Left ventricle myocardium superior (tissue), 1 donor: ENCODE measurements at regions of chr6 and their contacts with region 1.

Region 1: GRCh38 chr6:152916035-152916434 is 66.8 kb downstream of the FBXO5 start:
- DNase-seq: no peak
- ATAC-seq: no peak

Region 2: DNA sequence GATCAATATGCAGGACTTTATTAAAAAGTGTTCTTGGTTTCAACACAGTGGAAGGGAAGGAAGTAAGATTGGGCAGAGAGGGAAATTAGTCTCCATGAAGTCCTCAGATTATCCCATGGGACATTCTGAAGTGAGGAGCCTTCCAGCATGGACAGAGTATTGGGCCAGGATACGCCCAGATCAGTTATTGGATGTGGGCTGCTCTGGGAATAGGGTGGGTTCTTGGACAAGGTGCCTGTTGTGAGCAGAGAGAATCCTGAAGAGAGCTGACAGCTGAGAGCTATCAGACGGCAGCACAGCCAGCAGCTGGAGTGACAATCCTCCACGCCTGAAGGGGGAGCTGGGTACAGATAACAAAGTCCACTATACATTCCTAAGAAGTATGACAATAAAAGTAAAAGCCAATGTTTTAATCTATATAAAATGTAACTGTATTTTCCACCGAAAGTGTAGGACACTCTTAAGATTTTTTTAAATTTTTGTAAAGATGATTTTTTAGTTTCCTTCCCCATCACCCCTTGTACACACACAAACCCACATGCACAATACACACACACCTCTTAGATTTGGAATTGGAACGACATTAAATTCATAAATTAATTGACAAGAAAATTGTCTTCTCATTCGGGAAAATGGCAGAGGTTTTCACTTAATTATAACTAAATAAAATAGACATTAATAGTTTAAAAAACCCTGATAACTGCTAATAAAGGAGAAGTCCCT is 41.0 kb before region 1 on chr6:
- intact Hi-C with region 1: loop called (anchors 2 kb)
- DNase-seq: no peak
- ATAC-seq: no peak